AG04450 (cell line): ENCODE measurements at regions of chrX and their contacts with region 1.

Region 1: GRCh38 chrX:12139934-12140611 is 1.8 kb downstream of the FRMPD4 start:
- DNase-seq: no peak
- H3K4me3 ChIP-seq: peak overlapping the region; percentile 64
- H3K27ac ChIP-seq: no peak overlapping the region
- H3K27me3 ChIP-seq: no peaks in the 10 kb centered on the region
- CTCF ChIP-seq: no peak

Region 2: GRCh38 chrX:12026481-12026880 is 113.6 kb before region 1 on chrX:
- CTCF ChIA-PET with region 1: no interaction called
- POLR2A ChIA-PET with region 1: no interaction called
- DNase-seq: no peak
- H3K4me3 ChIP-seq: no peak overlapping the region
- H3K27ac ChIP-seq: no peak overlapping the region
- H3K27me3 ChIP-seq: no peaks in the 10 kb centered on the region
- CTCF ChIP-seq: no peak

Region 3: DNA sequence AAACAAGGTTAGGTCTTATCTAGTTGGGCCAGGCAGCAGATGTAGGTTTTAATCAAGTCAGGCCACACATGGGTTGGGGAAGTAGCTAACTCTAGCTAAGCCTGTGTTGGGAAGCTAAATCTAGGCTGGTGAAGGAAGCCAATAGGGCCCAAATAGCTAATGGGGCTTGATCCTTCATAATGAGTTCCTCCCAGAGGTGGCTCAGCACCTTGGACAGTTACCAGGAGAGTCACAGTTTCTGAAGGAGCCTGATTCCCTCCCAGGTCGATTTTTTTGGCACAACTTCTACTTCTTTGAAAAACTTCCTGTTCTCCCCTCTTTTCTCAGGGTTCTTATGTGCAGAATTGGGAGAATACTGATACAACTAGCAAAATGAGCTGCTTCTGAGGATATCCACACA is 408.7 kb after region 1 on chrX:
- CTCF ChIA-PET with region 1: interaction called, 11 read pairs
- POLR2A ChIA-PET with region 1: no interaction called
- DNase-seq: peak; percentile 0
- H3K4me3 ChIP-seq: no peak overlapping the region
- H3K27ac ChIP-seq: no peak overlapping the region
- H3K27me3 ChIP-seq: no peaks in the 10 kb centered on the region
- CTCF ChIP-seq: no peak